ENCODE measurements at regions of chr6 and their contacts with region 1.

Region 1: GRCh38 chr6:111478749-111479148 is 4.3 kb downstream of the REV3L start:
- DNase-seq: no peak
- H3K4me3 ChIP-seq: no peak overlapping the region
- H3K27ac ChIP-seq: no peak overlapping the region
- H3K4me1 ChIP-seq: peaks cover 8% of the 10 kb centered on the region
- H3K27me3 ChIP-seq: no peaks in the 10 kb centered on the region
- CTCF ChIP-seq: no peak
- EP300 ChIP-seq: no peak
- POLR2A ChIP-seq: no peak

Region 2: GRCh38 chr6:111011360-111012142 is 467.2 kb before region 1 on chr6:
- intact Hi-C with region 1: loop called in 1 of 4 experiments (anchors 5 kb)
- DNase-seq: no peak
- H3K4me3 ChIP-seq: no peak overlapping the region
- H3K27ac ChIP-seq: no peak overlapping the region
- H3K4me1 ChIP-seq: peaks cover 3% of the 10 kb centered on the region
- H3K27me3 ChIP-seq: no peaks in the 10 kb centered on the region
- CTCF ChIP-seq: peak in 2 of 3 donors; percentile 25 to 31
- EP300 ChIP-seq: no peak
- POLR2A ChIP-seq: no peak

Region 3: DNA sequence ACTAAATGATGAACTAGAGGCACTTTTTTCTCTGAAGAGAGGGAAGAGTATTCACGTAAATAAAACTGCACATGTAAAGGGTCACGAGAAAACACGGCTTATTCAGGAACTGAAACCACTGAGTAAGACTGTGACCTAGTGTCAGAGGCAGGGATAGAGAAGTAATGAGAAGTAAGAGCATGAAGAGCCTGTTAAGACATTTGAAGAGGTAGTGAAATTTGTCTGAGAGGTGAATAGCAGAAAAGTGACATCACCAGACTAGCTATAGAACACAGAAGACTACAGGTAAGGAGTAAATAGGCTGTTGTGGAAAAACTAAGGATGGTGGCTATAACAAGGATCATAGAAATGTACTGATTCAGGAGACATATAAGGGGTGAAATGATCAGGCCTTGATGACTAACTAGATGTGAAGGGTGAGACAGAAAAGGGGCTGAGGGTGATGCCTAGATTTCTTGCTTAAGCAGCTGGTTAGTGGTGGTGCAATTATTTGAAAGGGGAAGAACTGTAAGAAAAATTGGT is 72.5 kb before region 1 on chr6:
- intact Hi-C with region 1: no loop called
- DNase-seq: no peak
- H3K4me3 ChIP-seq: no peak overlapping the region
- H3K27ac ChIP-seq: no peak overlapping the region
- H3K4me1 ChIP-seq: peaks cover 1% of the 10 kb centered on the region
- H3K27me3 ChIP-seq: no peaks in the 10 kb centered on the region
- CTCF ChIP-seq: no peak
- EP300 ChIP-seq: no peak
- POLR2A ChIP-seq: no peak

Region 4: GRCh38 chr6:111534231-111534751 is 55.5 kb after region 1 on chr6:
- intact Hi-C with region 1: no loop called
- DNase-seq: peak; percentile 38 to 64 (median 60)
- H3K4me3 ChIP-seq: no peak overlapping the region
- H3K27ac ChIP-seq: peak overlapping the region in 1 of 2 donors; percentile 30
- H3K4me1 ChIP-seq: peaks cover 9% of the 10 kb centered on the region
- H3K27me3 ChIP-seq: no peaks in the 10 kb centered on the region
- CTCF ChIP-seq: no peak
- EP300 ChIP-seq: no peak
- POLR2A ChIP-seq: no peak

Region 5: GRCh38 chr6:112043032-112044007 is 564.6 kb after region 1 on chr6:
- intact Hi-C with region 1: no loop called
- DNase-seq: peak; percentile 80 to 93 (median 88)
- H3K4me3 ChIP-seq: peak overlapping the region; percentile 45
- H3K27ac ChIP-seq: peak overlapping the region; percentile 51 to 68
- H3K4me1 ChIP-seq: no peaks in the 10 kb centered on the region
- H3K27me3 ChIP-seq: no peaks in the 10 kb centered on the region
- CTCF ChIP-seq: peak; percentile 86 to 95 (median 88)
- EP300 ChIP-seq: no peak
- POLR2A ChIP-seq: no peak